IMR-90 (cell line): ENCODE measurements at regions of chr6 and their contacts with region 1.

Region 1: DNA sequence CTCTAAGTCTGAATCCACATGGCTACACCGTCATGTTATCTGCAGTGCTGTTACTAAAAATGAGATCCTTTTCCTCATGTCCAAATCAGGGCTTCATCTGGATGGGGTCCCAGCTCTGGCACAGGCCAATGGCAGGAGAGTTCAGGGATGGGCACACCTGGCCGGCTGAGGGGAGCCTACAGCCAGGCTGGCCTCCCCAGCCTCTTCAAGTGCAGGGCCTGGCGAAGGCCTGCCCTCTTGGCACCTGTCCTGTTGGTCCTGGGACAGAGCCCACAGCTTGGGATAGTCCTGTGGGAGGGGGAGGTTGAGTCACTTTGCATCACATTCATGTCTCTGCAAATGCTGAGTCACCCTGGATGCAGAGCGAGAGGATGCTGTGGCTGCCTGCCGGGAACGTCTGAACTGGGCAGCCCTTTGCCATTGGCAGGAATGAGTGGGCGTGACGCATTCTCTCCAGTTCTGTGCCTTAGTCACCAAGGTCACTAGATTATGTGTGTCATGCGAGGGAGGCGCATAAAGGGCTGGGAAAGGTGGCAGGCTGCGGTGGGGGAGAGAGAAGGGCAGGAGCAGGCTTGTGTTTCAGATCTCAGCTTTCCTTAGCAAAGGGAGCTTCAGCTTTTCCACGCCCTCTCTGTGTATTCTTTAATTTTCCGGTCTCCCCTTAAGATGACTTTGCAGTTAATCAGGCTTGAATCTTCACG is 223.2 kb upstream of the ECI2 start:
- DNase-seq: peak; percentile 100
- ATAC-seq: peak; percentile 92
- H3K4me3 ChIP-seq: no peak overlapping the region
- H3K27ac ChIP-seq: peak overlapping the region; percentile 83
- H3K4me1 ChIP-seq: peaks cover 13% of the 10 kb centered on the region
- H3K27me3 ChIP-seq: no peaks in the 10 kb centered on the region
- CTCF ChIP-seq: no peak
- POLR2A ChIP-seq: peak; percentile 77; the same call in 1 of the 2 replicates
- RAD21 ChIP-seq: peak; percentile 37

Region 2: GRCh38 chr6:4135665-4136353 is 222.8 kb before region 1 on chr6:
- CTCF ChIA-PET with region 1: no interaction called
- POLR2A ChIA-PET with region 1: no interaction called
- dilution Hi-C with region 1: no loop called
- in situ Hi-C with region 1: no loop called
- intact Hi-C with region 1: loop called (anchors 10 kb)
- DNase-seq: peak; percentile 90
- ATAC-seq: peak; percentile 95
- H3K4me3 ChIP-seq: peak overlapping the region; percentile 93
- H3K27ac ChIP-seq: peak overlapping the region; percentile 95
- H3K4me1 ChIP-seq: peaks cover 5% of the 10 kb centered on the region
- H3K27me3 ChIP-seq: no peaks in the 10 kb centered on the region
- CTCF ChIP-seq: no peak
- POLR2A ChIP-seq: no peak
- RAD21 ChIP-seq: no peak

Region 3: GRCh38 chr6:4180652-4181255 is 177.8 kb before region 1 on chr6:
- CTCF ChIA-PET with region 1: no interaction called
- POLR2A ChIA-PET with region 1: no interaction called
- dilution Hi-C with region 1: no loop called
- in situ Hi-C with region 1: no loop called
- intact Hi-C with region 1: no loop called
- DNase-seq: peak; percentile 63
- ATAC-seq: peak; percentile 65
- H3K4me3 ChIP-seq: no peak overlapping the region
- H3K27ac ChIP-seq: no peak overlapping the region
- H3K4me1 ChIP-seq: no peaks in the 10 kb centered on the region; the same call in 1 of the 2 replicates
- H3K27me3 ChIP-seq: peaks cover 11% of the 10 kb centered on the region; the same call in 1 of the 2 replicates
- CTCF ChIP-seq: no peak
- POLR2A ChIP-seq: no peak
- RAD21 ChIP-seq: no peak

Region 4: GRCh38 chr6:4309540-4309939 is 49.0 kb before region 1 on chr6:
- CTCF ChIA-PET with region 1: no interaction called
- POLR2A ChIA-PET with region 1: no interaction called
- dilution Hi-C with region 1: no loop called
- in situ Hi-C with region 1: no loop called
- intact Hi-C with region 1: no loop called
- DNase-seq: no peak
- ATAC-seq: no peak
- H3K4me3 ChIP-seq: no peak overlapping the region
- H3K27ac ChIP-seq: no peak overlapping the region
- H3K4me1 ChIP-seq: peaks cover 5% of the 10 kb centered on the region
- H3K27me3 ChIP-seq: no peaks in the 10 kb centered on the region
- CTCF ChIP-seq: no peak
- POLR2A ChIP-seq: no peak
- RAD21 ChIP-seq: no peak

Region 5: GRCh38 chr6:4581796-4582385 is 223.3 kb after region 1 on chr6:
- CTCF ChIA-PET with region 1: no interaction called
- POLR2A ChIA-PET with region 1: no interaction called
- dilution Hi-C with region 1: no loop called
- in situ Hi-C with region 1: no loop called
- intact Hi-C with region 1: loop called (anchors 5 kb)
- DNase-seq: peak; percentile 95
- ATAC-seq: peak; percentile 90
- H3K4me3 ChIP-seq: no peak overlapping the region
- H3K27ac ChIP-seq: peak overlapping the region; percentile 87
- H3K4me1 ChIP-seq: peaks cover 19% of the 10 kb centered on the region
- H3K27me3 ChIP-seq: no peaks in the 10 kb centered on the region
- CTCF ChIP-seq: no peak
- POLR2A ChIP-seq: no peak
- RAD21 ChIP-seq: peak; percentile 1; the same call in 1 of the 2 replicates

Region 6: DNA sequence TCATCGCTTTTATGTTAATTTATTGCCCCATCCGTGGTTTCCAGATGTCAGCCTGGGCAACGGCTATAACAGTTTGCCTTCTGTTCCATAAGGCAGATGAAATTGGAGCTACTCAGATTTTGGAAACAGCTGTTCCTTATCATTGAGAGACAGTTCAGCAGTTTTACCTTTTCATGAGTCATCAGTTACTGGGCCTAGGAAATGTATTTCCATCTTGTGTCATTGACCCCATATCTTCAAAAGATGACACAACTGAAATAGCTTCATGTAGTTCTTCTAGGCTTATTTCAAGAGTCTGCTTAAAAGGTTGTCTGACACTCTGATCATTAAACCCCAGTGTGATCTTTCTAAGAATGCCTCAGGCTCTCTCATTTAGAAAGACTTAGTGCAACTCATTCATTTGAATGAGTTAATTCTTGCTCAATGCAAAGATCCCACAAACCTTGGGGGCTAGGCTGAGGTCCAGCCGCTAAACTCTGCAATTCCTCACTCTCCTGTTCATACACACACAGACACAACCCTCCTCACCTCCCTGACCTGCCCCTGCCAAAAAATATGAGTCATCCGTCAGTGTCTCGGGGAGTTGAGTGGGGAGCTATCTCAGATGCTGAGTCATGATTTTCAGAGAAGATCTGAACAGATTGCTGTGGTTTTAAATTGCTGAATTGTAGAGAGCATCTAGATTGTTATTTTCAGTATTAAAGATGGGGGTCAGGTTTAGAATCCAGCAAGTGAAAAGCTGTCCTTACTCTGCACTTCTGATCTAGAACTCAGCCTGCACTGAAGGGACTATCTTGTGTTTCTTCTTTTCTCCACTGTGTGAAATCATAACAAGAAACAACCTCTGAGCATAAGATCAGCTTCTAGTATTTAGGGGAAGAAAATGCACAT is 583.5 kb after region 1 on chr6:
- CTCF ChIA-PET with region 1: no interaction called
- POLR2A ChIA-PET with region 1: no interaction called
- dilution Hi-C with region 1: no loop called
- in situ Hi-C with region 1: no loop called
- intact Hi-C with region 1: loop called (anchors 5 kb)
- DNase-seq: peak; percentile 96
- ATAC-seq: peak; percentile 93
- H3K4me3 ChIP-seq: no peak overlapping the region
- H3K27ac ChIP-seq: peak overlapping the region; percentile 87; the same call in 1 of the 2 replicates
- H3K4me1 ChIP-seq: peaks cover 18% of the 10 kb centered on the region
- H3K27me3 ChIP-seq: no peaks in the 10 kb centered on the region
- CTCF ChIP-seq: no peak
- POLR2A ChIP-seq: no peak
- RAD21 ChIP-seq: no peak; the same call in 1 of the 2 replicates